Transverse colon (tissue), 4 donors: ENCODE measurements at regions of chr15 and their contacts with region 1.

Region 1: GRCh38 chr15:69058830-69059556 is 44.5 kb downstream of the NOX5 start:
- DNase-seq: peak; percentile 89
- H3K4me3 ChIP-seq: no peak overlapping the region
- H3K27ac ChIP-seq: no peak overlapping the region
- H3K4me1 ChIP-seq: peaks cover 0 to 21% (median 9%) of the 10 kb centered on the region in 4 donors
- H3K27me3 ChIP-seq: peaks cover 15% of the 10 kb centered on the region
- CTCF ChIP-seq: peak; percentile 85 to 96 (median 88)
- EP300 ChIP-seq: no peak
- POLR2A ChIP-seq: no peak

Region 2: DNA sequence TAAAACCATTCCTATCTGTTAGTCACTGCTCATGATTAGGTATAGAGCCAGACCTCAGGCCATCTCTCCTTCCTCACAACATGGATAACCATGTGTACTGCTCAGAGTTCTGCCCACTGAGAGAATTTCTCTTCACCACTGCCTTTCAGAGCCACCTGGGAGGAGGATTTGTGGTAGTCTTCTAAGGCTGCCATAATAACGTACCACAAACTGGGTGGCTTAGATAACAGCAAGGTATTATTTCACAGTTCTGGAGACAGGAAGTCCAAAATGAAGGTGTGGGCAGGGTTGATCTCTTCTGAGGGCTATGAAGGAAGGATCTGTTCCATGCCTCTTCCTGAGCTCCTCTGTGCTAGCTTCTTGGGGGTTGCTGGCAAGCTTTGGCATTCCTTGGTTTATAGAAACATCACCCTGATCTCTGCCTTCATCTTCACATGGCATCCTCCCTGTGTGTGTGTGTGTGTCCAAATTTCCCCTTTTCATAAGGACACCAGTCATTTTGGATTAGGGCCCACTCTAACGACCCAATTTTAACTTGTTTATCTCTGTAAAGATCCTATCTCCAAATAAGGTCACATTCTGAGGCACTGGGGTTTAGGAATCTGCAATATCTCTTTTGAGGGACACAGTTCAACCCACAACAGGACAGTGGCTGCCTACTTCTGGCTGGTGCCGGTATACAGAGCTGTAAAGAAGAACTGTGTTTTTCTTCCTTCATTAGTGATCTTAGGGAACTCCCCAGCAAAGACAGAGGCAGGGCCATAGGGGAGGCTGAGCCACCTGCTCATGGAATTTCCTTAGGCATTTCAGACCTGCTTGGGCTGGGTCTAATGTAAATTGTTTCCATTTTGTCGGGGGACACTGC is 86.6 kb before region 1 on chr15:
- in situ Hi-C with region 1: no loop called
- intact Hi-C with region 1: no loop called
- DNase-seq: no peak
- H3K4me3 ChIP-seq: no peak overlapping the region
- H3K27ac ChIP-seq: peak overlapping the region in 1 of 4 donors; percentile 18
- H3K4me1 ChIP-seq: peaks cover 0 to 6% (median 0%) of the 10 kb centered on the region in 4 donors
- H3K27me3 ChIP-seq: no peaks in the 10 kb centered on the region
- CTCF ChIP-seq: no peak
- EP300 ChIP-seq: no peak
- POLR2A ChIP-seq: no peak

Region 3: GRCh38 chr15:69128667-69129321 is 69.8 kb after region 1 on chr15:
- in situ Hi-C with region 1: no loop called
- intact Hi-C with region 1: no loop called
- DNase-seq: no peak
- H3K4me3 ChIP-seq: no peak overlapping the region
- H3K27ac ChIP-seq: no peak overlapping the region
- H3K4me1 ChIP-seq: peaks cover 0 to 9% (median 5%) of the 10 kb centered on the region in 4 donors
- H3K27me3 ChIP-seq: no peaks in the 10 kb centered on the region
- CTCF ChIP-seq: no peak
- EP300 ChIP-seq: no peak
- POLR2A ChIP-seq: no peak

Region 4: DNA sequence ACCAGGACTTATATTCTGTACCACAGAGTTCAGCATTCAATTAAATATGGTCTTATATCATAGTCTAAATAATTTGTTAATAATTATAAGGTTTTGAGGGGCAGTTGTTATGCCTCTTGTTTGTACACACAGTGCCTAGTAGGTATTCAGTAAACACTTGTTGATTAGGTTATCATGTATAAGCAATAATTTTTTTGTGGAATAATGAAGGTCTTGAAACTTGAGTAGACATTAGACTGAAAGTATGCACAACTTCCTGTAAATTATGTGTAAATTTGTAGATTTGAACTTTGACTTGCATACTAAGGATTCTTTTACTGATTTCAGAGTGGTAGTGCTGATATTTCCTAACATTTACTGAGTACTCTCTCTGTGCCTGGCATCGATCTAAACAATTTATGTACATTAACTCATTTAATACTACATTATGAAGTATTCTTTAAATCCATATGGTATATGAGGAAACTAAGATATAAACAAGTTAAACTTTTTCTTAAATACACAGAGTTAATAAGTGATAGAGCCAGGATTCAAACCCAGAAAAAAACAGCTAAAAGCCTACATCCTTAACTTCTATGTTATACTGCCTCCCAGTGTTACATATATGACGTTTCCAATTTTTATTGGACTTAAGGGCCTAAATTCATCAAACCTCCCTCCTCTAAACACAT is 166.5 kb after region 1 on chr15:
- in situ Hi-C with region 1: loop called in 1 of 4 experiments (anchors 10 kb)
- intact Hi-C with region 1: no loop called
- DNase-seq: no peak
- H3K4me3 ChIP-seq: no peak overlapping the region
- H3K27ac ChIP-seq: peak overlapping the region in 3 of 4 donors; percentile 50 to 60 (median 57)
- H3K4me1 ChIP-seq: peaks cover 0 to 30% (median 9%) of the 10 kb centered on the region in 4 donors
- H3K27me3 ChIP-seq: no peaks in the 10 kb centered on the region
- CTCF ChIP-seq: peak in 4 of 5 experiments; percentile 19 to 44 (median 27)
- EP300 ChIP-seq: no peak
- POLR2A ChIP-seq: no peak

Region 5: GRCh38 chr15:69253156-69253555 is 194.2 kb after region 1 on chr15:
- in situ Hi-C with region 1: loop called in 3 of 4 experiments (anchors 10 to 25 kb)
- intact Hi-C with region 1: no loop called
- DNase-seq: no peak
- H3K4me3 ChIP-seq: no peak overlapping the region
- H3K27ac ChIP-seq: no peak overlapping the region
- H3K4me1 ChIP-seq: peaks cover 0 to 4% (median 0%) of the 10 kb centered on the region in 4 donors
- H3K27me3 ChIP-seq: no peaks in the 10 kb centered on the region
- CTCF ChIP-seq: no peak
- EP300 ChIP-seq: no peak
- POLR2A ChIP-seq: no peak

Region 6: DNA sequence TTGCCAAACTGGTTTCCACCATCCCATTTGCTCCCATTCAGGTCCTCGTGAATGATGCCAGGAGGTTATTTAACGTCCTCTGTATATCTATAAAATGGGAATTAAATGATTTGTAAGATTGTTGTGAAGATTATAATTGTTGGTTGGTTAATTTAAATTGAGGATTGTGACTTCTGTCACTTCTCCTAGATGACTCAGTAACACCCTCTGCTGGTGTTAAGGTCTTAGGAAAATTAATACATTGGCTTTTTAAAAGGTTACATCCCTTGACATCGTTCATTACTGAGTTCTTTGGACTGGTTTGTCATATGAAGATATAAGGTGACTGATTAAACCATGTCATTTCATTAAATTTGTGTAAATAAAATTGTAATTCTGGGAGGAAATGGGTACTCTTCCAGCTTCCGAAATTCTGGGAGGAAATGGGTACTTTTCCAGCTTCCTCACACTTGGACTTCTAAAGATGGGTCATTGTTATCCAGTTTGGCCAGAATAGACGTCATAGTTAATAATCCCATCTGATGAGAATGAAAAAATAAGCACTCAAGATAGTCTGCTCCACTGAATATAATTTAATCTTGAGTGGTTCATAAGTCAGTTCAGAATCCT is 206.5 kb after region 1 on chr15:
- in situ Hi-C with region 1: loop called in 3 of 4 experiments (anchors 10 to 25 kb)
- intact Hi-C with region 1: loop called (anchors 10 kb)
- DNase-seq: no peak
- H3K4me3 ChIP-seq: no peak overlapping the region
- H3K27ac ChIP-seq: no peak overlapping the region
- H3K4me1 ChIP-seq: no peaks in the 10 kb centered on the region
- H3K27me3 ChIP-seq: no peaks in the 10 kb centered on the region
- CTCF ChIP-seq: peak; percentile 44 to 59 (median 54)
- EP300 ChIP-seq: no peak
- POLR2A ChIP-seq: no peak

Region 7: GRCh38 chr15:69380100-69380727 is 321.2 kb after region 1 on chr15:
- in situ Hi-C with region 1: loop called in 2 of 4 experiments (anchors 10 to 25 kb)
- intact Hi-C with region 1: no loop called
- DNase-seq: no peak
- H3K4me3 ChIP-seq: no peak overlapping the region
- H3K27ac ChIP-seq: no peak overlapping the region
- H3K4me1 ChIP-seq: no peaks in the 10 kb centered on the region
- H3K27me3 ChIP-seq: no peaks in the 10 kb centered on the region
- CTCF ChIP-seq: no peak
- EP300 ChIP-seq: no peak
- POLR2A ChIP-seq: no peak

Region 8: GRCh38 chr15:69394556-69395282 is 335.7 kb after region 1 on chr15:
- in situ Hi-C with region 1: loop called in 2 of 4 experiments (anchors 10 to 25 kb)
- intact Hi-C with region 1: loop called (anchors 5 kb)
- DNase-seq: peak; percentile 81
- H3K4me3 ChIP-seq: no peak overlapping the region
- H3K27ac ChIP-seq: no peak overlapping the region
- H3K4me1 ChIP-seq: peaks cover 0 to 7% (median 5%) of the 10 kb centered on the region in 4 donors
- H3K27me3 ChIP-seq: no peaks in the 10 kb centered on the region
- CTCF ChIP-seq: peak; percentile 90 to 98 (median 96)
- EP300 ChIP-seq: no peak
- POLR2A ChIP-seq: no peak

Region 9: DNA sequence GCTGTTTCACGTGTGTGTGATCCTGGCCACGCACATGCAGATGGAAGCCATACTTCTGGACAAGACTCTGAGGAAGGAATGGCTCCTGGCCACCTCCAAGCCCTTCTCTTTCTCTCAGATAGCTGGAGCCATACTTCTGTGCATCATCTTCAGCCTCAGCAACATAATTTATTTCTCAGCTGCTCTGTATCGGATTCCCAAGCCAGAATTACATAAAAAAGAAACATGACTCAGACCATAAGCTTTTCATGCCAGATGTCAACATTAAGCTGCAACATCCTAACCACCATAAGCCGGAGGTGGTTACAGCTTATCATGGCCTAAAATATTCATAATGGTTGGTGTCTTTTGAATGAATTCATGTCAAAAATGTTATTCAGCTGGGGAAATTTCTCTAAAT is 344.6 kb after region 1 on chr15:
- in situ Hi-C with region 1: loop called (anchors 5 to 25 kb)
- intact Hi-C with region 1: no loop called
- DNase-seq: no peak
- H3K4me3 ChIP-seq: no peak overlapping the region
- H3K27ac ChIP-seq: no peak overlapping the region
- H3K4me1 ChIP-seq: no peaks in the 10 kb centered on the region
- H3K27me3 ChIP-seq: no peaks in the 10 kb centered on the region
- CTCF ChIP-seq: no peak
- EP300 ChIP-seq: no peak
- POLR2A ChIP-seq: no peak